ENCODE measurements at regions of chr13 and their contacts with region 1.

Region 1: GRCh38 chr13:40564342-40565001 is 102.0 kb downstream of the FOXO1 start:
- DNase-seq: peak in 2 of 9 experiments; percentile 33 to 61
- ATAC-seq: peak; percentile 47
- H3K4me3 ChIP-seq: no peak overlapping the region
- H3K4me3 Mint-ChIP-seq: peak overlapping the region; percentile 58
- H3K27ac ChIP-seq: no peak overlapping the region
- H3K27ac Mint-ChIP-seq: peak overlapping the region; percentile 83
- H3K4me1 ChIP-seq: peaks cover 77% of the 10 kb centered on the region
- H3K4me1 Mint-ChIP-seq: peaks cover 87% of the 10 kb centered on the region
- H3K27me3 ChIP-seq: no peaks in the 10 kb centered on the region
- H3K27me3 Mint-ChIP-seq: no peaks in the 10 kb centered on the region
- CTCF ChIP-seq: no peak

Region 2: DNA sequence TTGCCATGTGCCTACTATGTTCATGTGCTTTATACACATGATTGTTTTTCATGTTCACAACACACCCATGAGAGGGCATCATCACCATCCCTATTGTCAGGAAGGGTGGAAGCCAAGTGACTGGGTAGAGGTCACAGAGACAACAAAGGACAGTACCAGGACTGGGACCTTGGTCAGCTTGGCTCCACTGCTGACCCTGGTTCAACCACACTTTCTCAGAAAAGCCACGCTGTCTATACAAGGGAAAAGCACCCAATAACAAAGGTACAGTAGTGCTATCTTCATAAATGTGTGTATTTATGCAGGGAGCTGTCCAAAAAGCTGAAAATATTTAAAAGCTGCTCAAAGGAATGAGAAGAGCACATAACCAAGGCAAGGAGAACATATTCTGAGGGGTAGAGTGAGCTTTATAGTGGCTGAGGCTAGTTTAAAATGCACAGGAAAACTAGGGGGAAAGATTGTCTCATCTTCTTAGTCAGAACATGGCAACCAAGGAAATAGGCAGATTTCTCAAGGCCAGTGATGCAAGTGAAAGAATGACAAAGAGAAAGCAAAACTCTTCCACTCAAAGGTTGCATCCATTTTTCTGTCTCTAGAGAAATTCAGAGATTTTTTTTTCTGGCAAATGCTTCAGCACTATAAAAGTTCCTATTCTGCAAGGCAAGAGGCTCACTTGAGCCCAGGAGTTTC is 313.0 kb before region 1 on chr13:
- CTCF ChIA-PET with region 1: no interaction called
- POLR2A ChIA-PET with region 1: no interaction called
- intact Hi-C with region 1: no loop called
- DNase-seq: peak in 1 of 9 experiments; percentile 20
- ATAC-seq: no peak
- H3K4me3 ChIP-seq: no peak overlapping the region
- H3K4me3 Mint-ChIP-seq: no peak overlapping the region
- H3K27ac ChIP-seq: no peak overlapping the region
- H3K27ac Mint-ChIP-seq: no peak overlapping the region
- H3K4me1 ChIP-seq: peaks cover 14% of the 10 kb centered on the region
- H3K4me1 Mint-ChIP-seq: peaks cover 17% of the 10 kb centered on the region
- H3K27me3 ChIP-seq: no peaks in the 10 kb centered on the region
- H3K27me3 Mint-ChIP-seq: no peaks in the 10 kb centered on the region
- CTCF ChIP-seq: no peak

Region 3: GRCh38 chr13:40388617-40389016 is 175.9 kb before region 1 on chr13:
- CTCF ChIA-PET with region 1: no interaction called
- POLR2A ChIA-PET with region 1: no interaction called
- intact Hi-C with region 1: loop called in 1 of 2 experiments (anchors 5 kb)
- DNase-seq: peak; percentile 65 to 95 (median 85)
- ATAC-seq: peak; percentile 90
- H3K4me3 ChIP-seq: peak overlapping the region; percentile 48 to 53
- H3K4me3 Mint-ChIP-seq: peak overlapping the region; percentile 88
- H3K27ac ChIP-seq: peak overlapping the region; percentile 91 to 99
- H3K27ac Mint-ChIP-seq: peak overlapping the region; percentile 98
- H3K4me1 ChIP-seq: peaks cover 29% of the 10 kb centered on the region
- H3K4me1 Mint-ChIP-seq: peaks cover 73% of the 10 kb centered on the region
- H3K27me3 ChIP-seq: no peaks in the 10 kb centered on the region
- H3K27me3 Mint-ChIP-seq: no peaks in the 10 kb centered on the region
- CTCF ChIP-seq: no peak

Region 4: GRCh38 chr13:40440990-40441820 is 123.3 kb before region 1 on chr13:
- CTCF ChIA-PET with region 1: no interaction called
- POLR2A ChIA-PET with region 1: no interaction called
- intact Hi-C with region 1: loop called in 1 of 2 experiments (anchors 1 kb)
- DNase-seq: no peak
- ATAC-seq: no peak
- H3K4me3 ChIP-seq: no peak overlapping the region
- H3K4me3 Mint-ChIP-seq: no peak overlapping the region
- H3K27ac ChIP-seq: no peak overlapping the region
- H3K27ac Mint-ChIP-seq: no peak overlapping the region
- H3K4me1 ChIP-seq: peaks cover 23% of the 10 kb centered on the region
- H3K4me1 Mint-ChIP-seq: peaks cover 30% of the 10 kb centered on the region
- H3K27me3 ChIP-seq: no peaks in the 10 kb centered on the region
- H3K27me3 Mint-ChIP-seq: no peaks in the 10 kb centered on the region
- CTCF ChIP-seq: no peak

Region 5: GRCh38 chr13:40549500-40550094 is 14.9 kb before region 1 on chr13:
- CTCF ChIA-PET with region 1: no interaction called
- POLR2A ChIA-PET with region 1: interaction called, 5 read pairs
- intact Hi-C with region 1: loop called in 1 of 2 experiments (anchors 2 kb)
- DNase-seq: no peak
- ATAC-seq: no peak
- H3K4me3 ChIP-seq: no peak overlapping the region
- H3K4me3 Mint-ChIP-seq: no peak overlapping the region
- H3K27ac ChIP-seq: no peak overlapping the region
- H3K27ac Mint-ChIP-seq: peak overlapping the region; percentile 28
- H3K4me1 ChIP-seq: peaks cover 19% of the 10 kb centered on the region
- H3K4me1 Mint-ChIP-seq: peaks cover 46% of the 10 kb centered on the region
- H3K27me3 ChIP-seq: no peaks in the 10 kb centered on the region
- H3K27me3 Mint-ChIP-seq: no peaks in the 10 kb centered on the region
- CTCF ChIP-seq: no peak

Region 6: DNA sequence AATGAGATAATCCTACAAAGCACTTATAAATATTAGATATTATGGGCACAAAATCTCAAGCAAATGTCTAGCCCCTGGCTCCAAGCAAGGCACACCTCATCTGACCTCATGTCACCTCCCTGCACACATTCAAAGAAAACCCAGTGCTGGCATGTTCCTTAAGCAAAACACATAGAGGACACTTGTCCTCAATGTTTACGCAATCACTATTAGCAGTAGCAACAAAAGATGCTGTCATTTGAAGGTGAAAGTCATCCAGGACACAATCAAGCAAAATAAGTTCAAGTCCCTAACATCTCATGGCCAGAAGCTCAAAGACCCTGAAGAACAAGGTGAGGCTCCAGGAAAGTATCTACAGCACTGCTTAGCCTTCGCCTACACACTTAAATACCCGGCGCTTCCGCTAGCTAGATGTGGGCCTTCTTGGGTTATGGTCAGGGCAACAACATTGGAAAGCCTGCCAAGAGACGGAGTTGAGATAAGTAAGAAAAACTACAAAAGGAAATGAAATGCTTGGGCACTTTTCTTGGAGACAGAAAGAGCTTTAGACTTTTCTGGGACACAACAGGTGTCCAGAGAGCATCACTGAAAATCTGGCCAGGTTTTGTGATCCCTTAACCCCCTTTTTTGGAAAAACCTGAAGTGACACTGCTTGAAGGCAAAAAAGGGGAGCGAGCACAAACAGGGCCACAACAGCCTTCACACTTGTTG is 16.2 kb after region 1 on chr13:
- CTCF ChIA-PET with region 1: no interaction called
- POLR2A ChIA-PET with region 1: interaction called, 3 read pairs
- intact Hi-C with region 1: loop called in 1 of 2 experiments (anchors 2 kb)
- DNase-seq: no peak
- ATAC-seq: no peak
- H3K4me3 ChIP-seq: no peak overlapping the region
- H3K4me3 Mint-ChIP-seq: peak overlapping the region; percentile 12
- H3K27ac ChIP-seq: no peak overlapping the region
- H3K27ac Mint-ChIP-seq: peak overlapping the region; percentile 56
- H3K4me1 ChIP-seq: peaks cover 80% of the 10 kb centered on the region
- H3K4me1 Mint-ChIP-seq: peaks cover 92% of the 10 kb centered on the region
- H3K27me3 ChIP-seq: no peaks in the 10 kb centered on the region
- H3K27me3 Mint-ChIP-seq: no peaks in the 10 kb centered on the region
- CTCF ChIP-seq: no peak

Region 7: DNA sequence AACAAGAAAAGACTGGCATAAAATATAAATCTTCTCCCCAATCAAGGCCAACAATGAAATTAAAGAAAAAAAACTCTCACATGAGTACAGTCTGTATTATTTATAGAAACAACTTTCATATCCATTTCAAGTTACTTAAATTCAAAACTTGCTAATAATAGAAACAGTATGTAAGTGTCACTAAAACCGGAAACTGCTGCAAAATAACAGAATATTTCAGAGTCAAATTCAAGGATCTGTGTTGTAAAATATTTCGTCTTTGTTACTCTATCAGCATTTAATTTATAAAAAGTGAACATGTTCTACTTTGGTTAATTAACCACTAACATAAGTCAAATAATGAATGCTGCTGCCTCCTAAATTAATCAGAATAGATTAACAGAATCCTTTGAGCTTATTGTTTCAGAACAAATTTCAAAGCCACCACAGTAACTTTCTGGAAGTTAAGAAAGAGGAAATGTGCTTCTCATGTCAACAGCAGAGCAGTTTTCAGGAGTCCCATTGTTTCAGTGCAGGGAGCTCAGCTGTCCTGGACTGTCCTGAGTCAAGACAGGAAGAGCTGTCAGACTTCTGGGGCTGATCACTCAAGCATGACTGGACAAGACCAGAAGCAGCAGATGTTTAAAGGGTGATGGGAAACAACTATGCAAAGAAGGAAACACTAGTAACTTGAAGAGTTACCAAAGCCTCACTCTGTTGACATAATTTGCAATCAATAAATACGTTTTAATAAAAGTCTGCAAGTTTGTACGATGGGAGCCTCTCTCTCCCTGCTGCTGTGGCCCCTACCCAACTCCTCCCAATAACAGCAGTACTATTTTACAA is 25.0 kb after region 1 on chr13:
- CTCF ChIA-PET with region 1: no interaction called
- POLR2A ChIA-PET with region 1: interaction called, 3 read pairs
- intact Hi-C with region 1: loop called in 1 of 2 experiments (anchors 2 kb)
- DNase-seq: peak in 1 of 9 experiments; percentile 39
- ATAC-seq: peak; percentile 13
- H3K4me3 ChIP-seq: peak overlapping the region in 1 of 2 experiments; percentile 11
- H3K4me3 Mint-ChIP-seq: peak overlapping the region; percentile 50
- H3K27ac ChIP-seq: peak overlapping the region in 1 of 2 experiments; percentile 44
- H3K27ac Mint-ChIP-seq: peak overlapping the region; percentile 84
- H3K4me1 ChIP-seq: peaks cover 93% of the 10 kb centered on the region
- H3K4me1 Mint-ChIP-seq: peaks cover 97% of the 10 kb centered on the region
- H3K27me3 ChIP-seq: no peaks in the 10 kb centered on the region
- H3K27me3 Mint-ChIP-seq: no peaks in the 10 kb centered on the region
- CTCF ChIP-seq: no peak

Measured in CD8-positive, alpha-beta T cell (primary cell).